Mammary epithelial cell (primary cell): ENCODE measurements at regions of chr5 and their contacts with region 1.

Region 1: GRCh38 chr5:1140171-1140817 is 28.4 kb upstream of the SLC12A7 start:
- DNase-seq: peak; percentile 56
- H3K4me3 ChIP-seq: no peak overlapping the region
- H3K27ac ChIP-seq: no peak overlapping the region
- H3K4me1 ChIP-seq: peaks cover 16% of the 10 kb centered on the region
- H3K27me3 ChIP-seq: peaks cover 2% of the 10 kb centered on the region
- CTCF ChIP-seq: peak; percentile 29 to 74

Region 2: GRCh38 chr5:989961-990530 is 150.2 kb before region 1 on chr5:
- CTCF ChIA-PET with region 1: no interaction called
- dilution Hi-C with region 1: no loop called
- in situ Hi-C with region 1: no loop called
- intact Hi-C with region 1: loop called (anchors 1 kb)
- DNase-seq: no peak
- H3K4me3 ChIP-seq: no peak overlapping the region
- H3K27ac ChIP-seq: no peak overlapping the region
- H3K4me1 ChIP-seq: no peaks in the 10 kb centered on the region
- H3K27me3 ChIP-seq: peaks cover 5% of the 10 kb centered on the region
- CTCF ChIP-seq: peak in 1 of 2 donors; percentile 30

Region 3: GRCh38 chr5:1000329-1000728 is 140.0 kb before region 1 on chr5:
- CTCF ChIA-PET with region 1: no interaction called
- dilution Hi-C with region 1: no loop called
- in situ Hi-C with region 1: no loop called
- intact Hi-C with region 1: no loop called
- DNase-seq: no peak
- H3K4me3 ChIP-seq: no peak overlapping the region
- H3K27ac ChIP-seq: no peak overlapping the region
- H3K4me1 ChIP-seq: peaks cover 25% of the 10 kb centered on the region
- H3K27me3 ChIP-seq: peaks cover 12% of the 10 kb centered on the region
- CTCF ChIP-seq: no peak

Region 4: DNA sequence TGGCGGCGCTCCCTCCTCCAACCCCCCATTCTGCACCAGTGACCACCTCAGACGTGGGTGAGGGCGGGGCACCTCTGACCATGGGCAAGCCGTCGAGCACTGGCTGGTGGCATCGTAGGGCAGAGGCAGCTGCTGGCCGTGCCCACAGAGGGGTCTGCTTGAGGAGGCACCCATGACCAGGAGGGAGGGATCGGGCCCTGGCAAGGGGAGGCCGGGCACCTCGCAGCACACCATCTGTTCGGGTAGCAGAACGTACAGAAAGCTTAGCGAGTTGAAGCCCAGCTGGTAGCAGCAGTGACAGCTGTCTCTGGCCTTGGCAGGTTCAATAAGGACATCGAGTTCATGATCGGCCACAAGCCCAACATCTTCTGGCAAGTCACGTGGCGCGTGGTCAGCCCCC is 80.5 kb after region 1 on chr5:
- CTCF ChIA-PET with region 1: no interaction called
- dilution Hi-C with region 1: loop called (anchors 5 kb)
- in situ Hi-C with region 1: no loop called
- intact Hi-C with region 1: no loop called
- DNase-seq: no peak
- H3K4me3 ChIP-seq: no peak overlapping the region
- H3K27ac ChIP-seq: no peak overlapping the region
- H3K4me1 ChIP-seq: no peaks in the 10 kb centered on the region
- H3K27me3 ChIP-seq: no peaks in the 10 kb centered on the region
- CTCF ChIP-seq: no peak